ENCODE measurements at regions of chr2 and their contacts with region 1.

Region 1: DNA sequence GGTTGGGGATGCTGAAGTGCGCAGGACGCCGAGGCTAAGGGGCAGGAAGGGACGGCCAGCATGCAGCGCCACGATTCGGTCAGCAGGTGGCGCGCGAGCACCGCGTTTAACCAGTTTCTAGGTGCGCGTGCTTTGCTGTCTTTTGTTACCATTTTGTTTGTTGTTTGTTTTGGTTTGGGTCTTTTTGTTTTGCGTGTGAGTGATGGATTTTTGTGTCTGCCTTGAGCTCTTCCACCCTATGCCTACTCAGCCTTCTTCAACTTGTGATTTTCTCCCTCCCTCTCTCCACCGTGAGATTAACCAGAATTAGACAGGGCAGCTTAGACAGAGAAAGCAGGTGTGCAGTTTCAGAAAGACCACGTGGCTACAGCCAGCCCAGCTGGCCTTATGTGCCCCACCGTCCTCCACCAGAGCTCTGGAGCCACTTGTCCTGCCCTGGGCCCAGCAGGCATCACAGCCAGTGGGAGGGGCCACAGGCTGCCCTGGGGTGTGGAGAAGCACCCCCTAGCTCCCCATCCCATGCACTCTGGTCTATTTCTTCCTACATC is 180.2 kb downstream of the RNF144A start:
- DNase-seq: peak; percentile 44 to 86 (median 66)
- ATAC-seq: peak; percentile 97
- H3K4me3 ChIP-seq: peak overlapping the region; percentile 6
- H3K4me3 Mint-ChIP-seq: peak overlapping the region; percentile 42
- H3K27ac ChIP-seq: no peak overlapping the region
- H3K27ac Mint-ChIP-seq: no peak overlapping the region
- H3K4me1 ChIP-seq: peaks cover 9% of the 10 kb centered on the region
- H3K4me1 Mint-ChIP-seq: peaks cover 7% of the 10 kb centered on the region
- H3K27me3 ChIP-seq: no peaks in the 10 kb centered on the region
- H3K27me3 Mint-ChIP-seq: no peaks in the 10 kb centered on the region
- CTCF ChIP-seq: peak; percentile 99

Region 2: DNA sequence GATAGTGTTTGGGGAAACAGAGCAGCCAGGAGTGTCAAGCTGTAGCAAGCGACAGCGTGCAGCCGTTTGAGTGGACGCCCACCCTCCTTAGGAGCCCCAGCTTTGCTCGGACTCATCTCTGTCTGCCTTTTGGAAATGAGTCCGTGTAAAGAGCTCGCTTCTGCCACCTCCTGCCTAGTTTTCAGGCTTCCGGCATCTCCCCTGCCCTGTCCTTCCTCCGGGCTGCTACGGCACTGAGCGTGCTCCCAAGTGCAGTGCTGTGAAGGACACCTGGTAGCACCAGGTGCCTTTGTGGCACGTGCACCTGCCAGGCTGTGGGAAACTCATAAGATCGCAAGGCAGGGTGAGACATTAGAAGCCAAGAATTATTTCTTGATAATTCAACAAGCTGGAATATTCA is 63.1 kb before region 1 on chr2:
- CTCF ChIA-PET with region 1: no interaction called
- POLR2A ChIA-PET with region 1: no interaction called
- intact Hi-C with region 1: no loop called
- DNase-seq: no peak
- ATAC-seq: no peak
- H3K4me3 ChIP-seq: no peak overlapping the region
- H3K4me3 Mint-ChIP-seq: no peak overlapping the region
- H3K27ac ChIP-seq: no peak overlapping the region
- H3K27ac Mint-ChIP-seq: peak overlapping the region; percentile 51
- H3K4me1 ChIP-seq: peaks cover 23% of the 10 kb centered on the region
- H3K4me1 Mint-ChIP-seq: peaks cover 27% of the 10 kb centered on the region
- H3K27me3 ChIP-seq: no peaks in the 10 kb centered on the region
- H3K27me3 Mint-ChIP-seq: no peaks in the 10 kb centered on the region
- CTCF ChIP-seq: no peak

Region 3: DNA sequence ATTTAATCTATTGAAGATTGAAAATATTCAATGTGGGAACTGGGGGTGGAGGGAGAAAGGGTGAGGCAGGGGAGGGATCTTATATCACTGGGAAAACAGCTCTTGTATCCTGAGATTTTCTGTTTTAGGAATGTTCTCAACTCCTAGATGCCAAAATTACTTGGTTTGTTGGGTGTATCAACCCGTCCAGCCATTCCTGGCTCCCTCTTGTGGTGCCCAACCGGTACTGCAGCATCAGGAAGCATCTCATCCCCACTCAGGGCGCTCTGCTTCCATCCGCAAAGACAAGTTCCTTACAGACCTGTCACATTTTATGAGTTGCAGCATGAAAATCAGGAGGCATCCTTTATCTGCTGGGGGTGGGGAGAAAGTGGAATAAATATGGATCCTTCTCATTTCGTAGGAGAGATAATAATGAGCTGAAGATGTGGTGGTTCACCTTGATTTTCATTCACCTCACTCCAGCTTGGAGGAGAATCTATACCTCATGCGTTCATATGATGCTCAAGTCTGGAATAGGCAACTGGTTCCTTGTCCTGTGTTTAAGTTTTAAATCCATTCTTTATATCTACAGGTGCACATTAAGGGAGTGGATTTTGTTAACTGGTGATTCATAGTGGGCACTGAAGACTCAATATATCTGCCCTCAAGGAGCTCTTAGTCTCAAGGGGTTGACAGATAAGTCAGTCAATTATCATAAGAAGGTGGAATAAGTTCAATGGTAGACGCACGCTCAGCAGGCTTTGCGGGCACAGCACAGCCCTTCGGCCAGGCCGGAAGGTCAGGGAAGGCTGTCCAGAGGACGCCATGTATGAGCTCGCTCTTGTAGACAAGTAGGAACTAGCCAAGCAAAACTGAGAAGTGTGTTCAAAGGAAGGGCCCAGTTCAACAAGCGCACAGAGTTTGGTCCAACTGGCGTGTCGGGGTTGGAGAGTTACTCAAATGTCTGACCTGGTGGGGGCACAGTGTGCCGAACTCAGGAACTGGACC is 52.9 kb before region 1 on chr2:
- CTCF ChIA-PET with region 1: no interaction called
- POLR2A ChIA-PET with region 1: no interaction called
- intact Hi-C with region 1: loop called in 1 of 2 experiments (anchors 5 kb)
- DNase-seq: peak; percentile 36 to 81 (median 59)
- ATAC-seq: peak; percentile 86
- H3K4me3 ChIP-seq: no peak overlapping the region
- H3K4me3 Mint-ChIP-seq: no peak overlapping the region
- H3K27ac ChIP-seq: no peak overlapping the region
- H3K27ac Mint-ChIP-seq: peak overlapping the region; percentile 38
- H3K4me1 ChIP-seq: peaks cover 11% of the 10 kb centered on the region
- H3K4me1 Mint-ChIP-seq: peaks cover 37% of the 10 kb centered on the region
- H3K27me3 ChIP-seq: no peaks in the 10 kb centered on the region
- H3K27me3 Mint-ChIP-seq: no peaks in the 10 kb centered on the region
- CTCF ChIP-seq: peak; percentile 97

Region 4: GRCh38 chr2:7057865-7058400 is 39.5 kb before region 1 on chr2:
- CTCF ChIA-PET with region 1: no interaction called
- POLR2A ChIA-PET with region 1: no interaction called
- intact Hi-C with region 1: no loop called
- DNase-seq: peak in 4 of 14 experiments; percentile 36 to 62 (median 40)
- ATAC-seq: peak; percentile 37
- H3K4me3 ChIP-seq: peak overlapping the region; percentile 12
- H3K4me3 Mint-ChIP-seq: peak overlapping the region; percentile 72
- H3K27ac ChIP-seq: peak overlapping the region in 1 of 2 donors; percentile 57
- H3K27ac Mint-ChIP-seq: no peak overlapping the region
- H3K4me1 ChIP-seq: peaks cover 27% of the 10 kb centered on the region
- H3K4me1 Mint-ChIP-seq: no peaks in the 10 kb centered on the region
- H3K27me3 ChIP-seq: no peaks in the 10 kb centered on the region
- H3K27me3 Mint-ChIP-seq: no peaks in the 10 kb centered on the region
- CTCF ChIP-seq: no peak

Region 5: DNA sequence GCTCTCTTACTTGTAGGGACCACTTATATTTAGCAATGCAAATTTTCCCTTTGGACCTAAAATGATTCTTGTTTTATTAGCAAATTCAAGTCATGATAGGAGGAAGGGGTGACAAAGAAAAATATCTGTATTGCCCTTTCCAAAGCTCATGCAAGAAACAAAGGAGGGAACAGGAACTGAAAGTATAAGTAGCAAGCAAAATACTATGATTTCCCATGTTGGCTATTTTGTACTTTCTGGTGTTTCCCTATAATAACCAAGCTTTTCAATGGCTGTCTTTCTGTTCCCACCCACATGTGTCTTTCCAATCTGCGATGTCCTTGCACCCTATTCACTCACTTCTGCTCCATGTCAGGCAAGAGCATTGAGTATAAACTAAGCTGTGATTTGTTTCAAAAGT is 99.5 kb after region 1 on chr2:
- CTCF ChIA-PET with region 1: no interaction called
- POLR2A ChIA-PET with region 1: no interaction called
- intact Hi-C with region 1: loop called in 1 of 2 experiments (anchors 5 kb)
- DNase-seq: no peak
- ATAC-seq: no peak
- H3K4me3 ChIP-seq: no peak overlapping the region
- H3K4me3 Mint-ChIP-seq: no peak overlapping the region
- H3K27ac ChIP-seq: no peak overlapping the region
- H3K27ac Mint-ChIP-seq: no peak overlapping the region
- H3K4me1 ChIP-seq: no peaks in the 10 kb centered on the region
- H3K4me1 Mint-ChIP-seq: no peaks in the 10 kb centered on the region
- H3K27me3 ChIP-seq: no peaks in the 10 kb centered on the region
- H3K27me3 Mint-ChIP-seq: no peaks in the 10 kb centered on the region
- CTCF ChIP-seq: no peak

Region 6: GRCh38 chr2:8761529-8762164 is 1664.2 kb after region 1 on chr2:
- CTCF ChIA-PET with region 1: no interaction called
- POLR2A ChIA-PET with region 1: no interaction called
- intact Hi-C with region 1: loop called (anchors 2 to 5 kb)
- DNase-seq: peak in 3 of 14 experiments; percentile 22 to 29 (median 27)
- ATAC-seq: no peak
- H3K4me3 ChIP-seq: no peak overlapping the region
- H3K4me3 Mint-ChIP-seq: no peak overlapping the region
- H3K27ac ChIP-seq: no peak overlapping the region
- H3K27ac Mint-ChIP-seq: no peak overlapping the region
- H3K4me1 ChIP-seq: no peaks in the 10 kb centered on the region
- H3K4me1 Mint-ChIP-seq: peaks cover 5% of the 10 kb centered on the region
- H3K27me3 ChIP-seq: no peaks in the 10 kb centered on the region
- H3K27me3 Mint-ChIP-seq: no peaks in the 10 kb centered on the region
- CTCF ChIP-seq: peak; percentile 12